Sigmoid colon (tissue), 7 donors: ENCODE measurements at regions of chr1 and their contacts with region 1.

Region 1: GRCh38 chr1:42456010-42456758 is at the starts of genes PPCS and ZMYND12:
- DNase-seq: peak; percentile 92
- H3K4me3 ChIP-seq: peak within 1 kb of the TSS; percentile 80 to 99 (median 92)
- H3K27ac ChIP-seq: peak within 1 kb of the TSS; percentile 88 to 93 (median 90)
- H3K4me1 ChIP-seq: peaks cover 0 to 24% (median 19%) of the 10 kb centered on the region in 4 donors
- H3K27me3 ChIP-seq: no peaks in the 10 kb centered on the region
- CTCF ChIP-seq: peak in 2 of 4 experiments; percentile 23 to 45
- EP300 ChIP-seq: no peak
- POLR2A ChIP-seq: peak; percentile 36 to 66
- total RNA-seq, gene PPCS: 32.1 to 99.9 (median 52.5) TPM
- total RNA-seq, gene ZMYND12: 0.54 to 1.1 (median 0.77) TPM

Region 2: GRCh38 chr1:42420911-42421585 is 35.1 kb before region 1 on chr1:
- intact Hi-C with region 1: loop called (anchors 2 kb)
- DNase-seq: peak; percentile 90
- H3K4me3 ChIP-seq: no peak overlapping the region
- H3K27ac ChIP-seq: peak overlapping the region in 3 of 4 donors; percentile 74 to 87 (median 80)
- H3K4me1 ChIP-seq: peaks cover 0 to 38% (median 34%) of the 10 kb centered on the region in 4 donors
- H3K27me3 ChIP-seq: no peaks in the 10 kb centered on the region
- CTCF ChIP-seq: no peak
- EP300 ChIP-seq: peak in 3 of 4 donors; percentile 29 to 93 (median 80)
- POLR2A ChIP-seq: no peak

Region 3: DNA sequence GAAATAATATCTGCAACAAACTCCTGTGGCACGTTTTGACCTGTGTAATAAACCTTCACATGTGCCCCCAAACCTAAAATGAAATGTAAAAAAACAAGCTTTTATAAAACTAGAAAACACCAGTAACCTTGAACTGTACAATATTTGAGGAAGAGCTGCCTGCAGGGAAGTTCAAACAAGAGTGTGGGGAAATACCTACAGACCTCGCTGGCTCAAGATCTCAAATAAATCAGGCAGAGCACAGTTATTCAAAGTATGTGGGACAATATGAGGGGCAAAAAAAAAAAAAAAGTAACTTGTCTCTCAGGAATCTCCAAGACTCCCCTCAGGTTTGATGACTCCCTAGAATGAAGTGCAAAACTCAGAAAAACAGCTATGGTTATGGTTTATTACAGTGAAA is 164.1 kb after region 1 on chr1:
- intact Hi-C with region 1: no loop called
- DNase-seq: no peak
- H3K4me3 ChIP-seq: no peak overlapping the region
- H3K27ac ChIP-seq: no peak overlapping the region
- H3K4me1 ChIP-seq: no peaks in the 10 kb centered on the region
- H3K27me3 ChIP-seq: no peaks in the 10 kb centered on the region
- CTCF ChIP-seq: no peak
- EP300 ChIP-seq: no peak
- POLR2A ChIP-seq: no peak

Region 4: GRCh38 chr1:42766741-42767509 is 310.7 kb after region 1 on chr1 and contains the starts of genes C1orf50 and P3H1:
- intact Hi-C with region 1: no loop called
- DNase-seq: peak; percentile 100
- H3K4me3 ChIP-seq: peak within 1 kb of the TSS; percentile 91 to 98 (median 94)
- H3K27ac ChIP-seq: peak within 1 kb of the TSS; percentile 90 to 95 (median 94)
- H3K4me1 ChIP-seq: peaks cover 0 to 45% (median 40%) of the 10 kb centered on the region in 4 donors
- H3K27me3 ChIP-seq: no peaks in the 10 kb centered on the region
- CTCF ChIP-seq: no peak
- EP300 ChIP-seq: no peak
- POLR2A ChIP-seq: peak; percentile 94 to 97
- total RNA-seq, gene C1orf50: 2.2 to 6.9 (median 4.2) TPM
- total RNA-seq, gene P3H1: 15.3 to 23.3 (median 19.1) TPM